Cardiac septum (tissue), 1 donor: ENCODE measurements at regions of chr13 and their contacts with region 1.

Region 1: GRCh38 chr13:111114362-111115060 is 599 bp upstream of the ARHGEF7 start:
- DNase-seq: no peak

Region 2: DNA sequence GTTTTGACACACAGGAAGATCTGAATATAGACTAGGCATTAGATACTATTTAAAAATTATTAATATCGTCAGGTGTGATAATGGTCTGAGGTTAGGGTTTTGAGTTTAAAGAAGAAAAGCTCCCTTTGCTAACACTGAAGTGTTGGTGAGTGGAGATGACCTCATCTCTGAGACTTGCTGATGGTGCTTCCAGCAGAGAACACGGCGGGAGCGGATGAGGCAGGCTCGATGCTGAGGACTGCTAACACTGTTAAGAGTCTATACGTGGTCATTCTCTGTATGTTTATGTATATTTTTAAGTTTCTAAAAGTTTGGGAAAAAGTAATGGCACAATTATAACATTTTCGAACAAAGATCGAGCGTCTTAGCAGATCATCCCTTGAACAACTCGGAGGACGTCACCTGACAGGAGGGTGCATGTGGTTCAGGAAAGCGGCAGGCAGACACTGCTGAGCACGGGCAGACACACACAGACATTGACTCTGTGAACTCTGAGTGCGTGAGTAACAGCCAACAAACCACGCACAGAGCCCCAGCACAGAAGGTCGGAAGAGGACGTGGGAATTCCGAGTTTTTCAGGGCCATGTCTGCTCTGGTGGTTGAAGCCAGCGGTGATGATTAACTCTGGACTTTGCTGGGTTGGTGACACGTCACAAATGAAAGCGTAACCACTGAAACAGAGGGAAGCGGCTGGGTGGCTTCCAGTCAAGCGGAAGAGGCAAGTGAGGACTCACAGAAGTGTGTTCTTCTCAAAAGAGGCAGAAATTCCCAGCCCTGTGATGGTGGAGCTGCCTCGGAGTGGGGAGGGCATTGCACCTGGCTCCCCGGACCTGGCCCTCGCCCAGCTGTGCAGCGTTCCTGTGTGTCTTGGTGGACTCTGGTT is 114.0 kb after region 1 on chr13:
- intact Hi-C with region 1: loop called (anchors 5 kb)
- DNase-seq: no peak